ENCODE measurements at regions of chr3 and their contacts with region 1.

Region 1: GRCh38 chr3:52291508-52292181 is 4.0 kb downstream of the GLYCTK start:
- DNase-seq: peak in 12 of 14 experiments; percentile 19 to 66 (median 44)
- ATAC-seq: no peak
- H3K4me3 ChIP-seq: no peak overlapping the region
- H3K4me3 Mint-ChIP-seq: peak overlapping the region; percentile 80
- H3K27ac ChIP-seq: no peak overlapping the region
- H3K27ac Mint-ChIP-seq: peak overlapping the region; percentile 80
- H3K4me1 ChIP-seq: peaks cover 46% of the 10 kb centered on the region
- H3K4me1 Mint-ChIP-seq: peaks cover 38% of the 10 kb centered on the region
- H3K27me3 ChIP-seq: no peaks in the 10 kb centered on the region
- H3K27me3 Mint-ChIP-seq: no peaks in the 10 kb centered on the region
- CTCF ChIP-seq: peak; percentile 53

Region 2: GRCh38 chr3:51995346-51996163 is 296.1 kb before region 1 on chr3 and contains the start of gene RPL29:
- CTCF ChIA-PET with region 1: no interaction called
- POLR2A ChIA-PET with region 1: no interaction called
- intact Hi-C with region 1: loop called in 1 of 2 experiments (anchors 5 kb)
- DNase-seq: peak; percentile 87 to 97 (median 91)
- ATAC-seq: peak; percentile 98
- H3K4me3 ChIP-seq: peak within 1 kb of the TSS; percentile 88
- H3K4me3 Mint-ChIP-seq: peak within 1 kb of the TSS; percentile 99
- H3K27ac ChIP-seq: peak within 1 kb of the TSS; percentile 88 to 95
- H3K27ac Mint-ChIP-seq: peak within 1 kb of the TSS; percentile 97
- H3K4me1 ChIP-seq: peaks cover 40% of the 10 kb centered on the region
- H3K4me1 Mint-ChIP-seq: peaks cover 31% of the 10 kb centered on the region
- H3K27me3 ChIP-seq: no peaks in the 10 kb centered on the region
- H3K27me3 Mint-ChIP-seq: no peaks in the 10 kb centered on the region
- CTCF ChIP-seq: no peak
- total RNA-seq, gene RPL29: 1,843 to 1,901 TPM

Region 3: GRCh38 chr3:52245322-52246263 is 46.1 kb before region 1 on chr3 and contains the start of gene PPM1M:
- CTCF ChIA-PET with region 1: no interaction called
- POLR2A ChIA-PET with region 1: interaction called, 17 read pairs
- intact Hi-C with region 1: no loop called
- DNase-seq: peak in 13 of 14 experiments; percentile 28 to 90 (median 65)
- ATAC-seq: peak; percentile 64
- H3K4me3 ChIP-seq: peak within 1 kb of the TSS; percentile 91
- H3K4me3 Mint-ChIP-seq: peak within 1 kb of the TSS; percentile 88
- H3K27ac ChIP-seq: peak within 1 kb of the TSS; percentile 90 to 95
- H3K27ac Mint-ChIP-seq: peak within 1 kb of the TSS; percentile 95
- H3K4me1 ChIP-seq: peaks cover 82% of the 10 kb centered on the region
- H3K4me1 Mint-ChIP-seq: peaks cover 87% of the 10 kb centered on the region
- H3K27me3 ChIP-seq: no peaks in the 10 kb centered on the region
- H3K27me3 Mint-ChIP-seq: no peaks in the 10 kb centered on the region
- CTCF ChIP-seq: no peak
- total RNA-seq, gene PPM1M: 36.7 to 40.2 TPM

Region 4: GRCh38 chr3:52270252-52270754 is 21.3 kb before region 1 on chr3:
- CTCF ChIA-PET with region 1: no interaction called
- POLR2A ChIA-PET with region 1: interaction called, 18 read pairs
- intact Hi-C with region 1: no loop called
- DNase-seq: no peak
- ATAC-seq: no peak
- H3K4me3 ChIP-seq: peak overlapping the region; percentile 44
- H3K4me3 Mint-ChIP-seq: peak overlapping the region; percentile 87
- H3K27ac ChIP-seq: peak overlapping the region; percentile 70 to 75
- H3K27ac Mint-ChIP-seq: peak overlapping the region; percentile 92
- H3K4me1 ChIP-seq: peaks cover 67% of the 10 kb centered on the region
- H3K4me1 Mint-ChIP-seq: peaks cover 91% of the 10 kb centered on the region
- H3K27me3 ChIP-seq: no peaks in the 10 kb centered on the region
- H3K27me3 Mint-ChIP-seq: no peaks in the 10 kb centered on the region
- CTCF ChIP-seq: no peak

Region 5: GRCh38 chr3:52352566-52352965 is 60.9 kb after region 1 on chr3:
- CTCF ChIA-PET with region 1: no interaction called
- POLR2A ChIA-PET with region 1: no interaction called
- intact Hi-C with region 1: no loop called
- DNase-seq: peak in 1 of 14 experiments; percentile 5
- ATAC-seq: no peak
- H3K4me3 ChIP-seq: no peak overlapping the region
- H3K4me3 Mint-ChIP-seq: no peak overlapping the region
- H3K27ac ChIP-seq: no peak overlapping the region
- H3K27ac Mint-ChIP-seq: no peak overlapping the region
- H3K4me1 ChIP-seq: no peaks in the 10 kb centered on the region
- H3K4me1 Mint-ChIP-seq: no peaks in the 10 kb centered on the region
- H3K27me3 ChIP-seq: no peaks in the 10 kb centered on the region
- H3K27me3 Mint-ChIP-seq: no peaks in the 10 kb centered on the region
- CTCF ChIP-seq: no peak

Region 6: GRCh38 chr3:52406231-52406661 is 114.6 kb after region 1 on chr3:
- CTCF ChIA-PET with region 1: no interaction called
- POLR2A ChIA-PET with region 1: no interaction called
- intact Hi-C with region 1: loop called in 1 of 2 experiments (anchors 2 kb)
- DNase-seq: peak in 2 of 14 experiments; percentile 1 to 7
- ATAC-seq: no peak
- H3K4me3 ChIP-seq: no peak overlapping the region
- H3K4me3 Mint-ChIP-seq: peak overlapping the region; percentile 38
- H3K27ac ChIP-seq: no peak overlapping the region
- H3K27ac Mint-ChIP-seq: no peak overlapping the region
- H3K4me1 ChIP-seq: peaks cover 39% of the 10 kb centered on the region
- H3K4me1 Mint-ChIP-seq: peaks cover 22% of the 10 kb centered on the region
- H3K27me3 ChIP-seq: no peaks in the 10 kb centered on the region
- H3K27me3 Mint-ChIP-seq: no peaks in the 10 kb centered on the region
- CTCF ChIP-seq: no peak

Region 7: GRCh38 chr3:52754373-52754772 is 462.7 kb after region 1 on chr3:
- CTCF ChIA-PET with region 1: no interaction called
- POLR2A ChIA-PET with region 1: no interaction called
- intact Hi-C with region 1: no loop called
- DNase-seq: no peak
- ATAC-seq: no peak
- H3K4me3 ChIP-seq: no peak overlapping the region
- H3K4me3 Mint-ChIP-seq: no peak overlapping the region
- H3K27ac ChIP-seq: no peak overlapping the region
- H3K27ac Mint-ChIP-seq: no peak overlapping the region
- H3K4me1 ChIP-seq: no peaks in the 10 kb centered on the region
- H3K4me1 Mint-ChIP-seq: no peaks in the 10 kb centered on the region
- H3K27me3 ChIP-seq: no peaks in the 10 kb centered on the region
- H3K27me3 Mint-ChIP-seq: no peaks in the 10 kb centered on the region
- CTCF ChIP-seq: no peak

Measured in CD4-positive, alpha-beta T cell (primary cell).